ENCODE measurements at regions of chr3 and their contacts with region 1.

Region 1: GRCh38 chr3:168213920-168214319 is 118.2 kb upstream of the GOLIM4 start:
- DNase-seq: no peak
- H3K4me3 ChIP-seq: no peak overlapping the region
- H3K27ac ChIP-seq: no peak overlapping the region
- H3K4me1 ChIP-seq: peaks cover 0 to 6% (median 0%) of the 10 kb centered on the region in 4 donors
- H3K27me3 ChIP-seq: no peaks in the 10 kb centered on the region
- CTCF ChIP-seq: no peak
- EP300 ChIP-seq: no peak
- POLR2A ChIP-seq: no peak

Region 2: GRCh38 chr3:168061332-168061996 is 152.5 kb before region 1 on chr3:
- in situ Hi-C with region 1: no loop called
- intact Hi-C with region 1: no loop called
- DNase-seq: no peak
- H3K4me3 ChIP-seq: no peak overlapping the region
- H3K27ac ChIP-seq: peak overlapping the region in 1 of 4 donors; percentile 4
- H3K4me1 ChIP-seq: peaks cover 0 to 47% (median 32%) of the 10 kb centered on the region in 4 donors
- H3K27me3 ChIP-seq: no peaks in the 10 kb centered on the region
- CTCF ChIP-seq: no peak
- EP300 ChIP-seq: no peak
- POLR2A ChIP-seq: no peak

Region 3: DNA sequence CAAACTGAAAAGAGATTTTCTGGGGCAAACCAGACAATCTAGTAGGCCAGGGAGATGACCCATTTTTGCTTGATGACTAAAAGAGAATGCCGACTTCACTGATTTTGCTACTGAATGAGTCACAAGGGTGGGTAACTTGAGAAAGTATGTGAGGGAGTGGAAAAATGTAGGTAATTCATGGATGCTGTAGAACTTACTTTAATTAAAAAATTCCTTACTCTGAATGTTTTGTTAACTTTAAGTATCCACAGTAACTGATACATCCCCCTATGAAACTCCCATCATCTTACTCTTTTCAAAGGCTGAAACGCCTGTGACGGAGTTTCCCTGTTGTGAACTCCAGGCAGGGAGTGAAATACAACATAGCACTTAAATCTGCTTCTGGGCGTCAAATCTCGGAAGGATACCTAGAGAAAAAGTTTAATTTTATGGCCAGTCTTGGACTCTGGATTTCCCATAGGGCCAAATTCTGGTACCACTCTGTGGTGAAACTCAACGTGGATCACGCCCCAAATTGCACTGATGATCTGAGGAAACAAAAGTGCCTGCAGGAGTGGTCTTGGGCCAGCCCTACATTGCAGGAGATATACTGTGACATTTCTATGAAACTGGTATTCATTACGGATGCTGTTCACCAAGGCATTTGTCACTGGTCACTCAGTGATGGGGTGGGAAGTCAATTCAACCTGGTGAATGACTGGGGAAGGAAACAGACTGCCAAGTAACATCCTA is 142.2 kb before region 1 on chr3:
- in situ Hi-C with region 1: no loop called
- intact Hi-C with region 1: no loop called
- DNase-seq: no peak
- H3K4me3 ChIP-seq: no peak overlapping the region
- H3K27ac ChIP-seq: no peak overlapping the region
- H3K4me1 ChIP-seq: peaks cover 2 to 28% (median 9%) of the 10 kb centered on the region in 4 donors
- H3K27me3 ChIP-seq: no peaks in the 10 kb centered on the region
- CTCF ChIP-seq: no peak
- EP300 ChIP-seq: no peak
- POLR2A ChIP-seq: no peak

Region 4: DNA sequence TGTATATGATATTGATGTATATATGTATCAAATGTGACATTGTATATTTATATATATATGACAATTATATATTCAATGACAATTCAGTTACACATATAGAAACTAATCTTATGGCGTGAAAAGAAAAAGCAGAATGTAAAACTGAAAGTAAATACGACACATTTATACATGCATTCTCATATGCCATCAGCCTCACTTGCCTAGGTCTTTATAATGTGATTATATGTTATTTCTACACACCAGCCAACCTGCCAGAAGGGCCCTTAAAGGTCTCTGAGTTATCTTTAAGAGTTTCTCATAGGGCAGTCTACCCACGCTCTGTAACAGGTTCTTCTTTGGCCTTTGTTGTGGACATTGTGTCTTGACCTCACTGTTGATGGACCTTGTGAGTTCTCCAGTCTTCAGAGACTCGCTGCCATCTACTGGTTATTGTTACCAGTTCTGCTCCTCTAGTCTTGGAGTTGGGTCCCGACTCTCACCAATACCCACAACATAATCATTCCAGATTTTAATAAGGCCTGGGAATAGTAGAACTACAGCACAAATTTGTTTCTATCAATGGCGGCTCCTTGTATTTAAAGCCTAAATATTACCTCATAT is 253.3 kb after region 1 on chr3:
- in situ Hi-C with region 1: loop called in 2 of 4 experiments (anchors 25 kb)
- intact Hi-C with region 1: no loop called
- DNase-seq: no peak
- H3K4me3 ChIP-seq: no peak overlapping the region
- H3K27ac ChIP-seq: no peak overlapping the region
- H3K4me1 ChIP-seq: no peaks in the 10 kb centered on the region
- H3K27me3 ChIP-seq: no peaks in the 10 kb centered on the region
- CTCF ChIP-seq: peak in 2 of 5 experiments; percentile 17 to 21
- EP300 ChIP-seq: no peak
- POLR2A ChIP-seq: no peak

Region 5: DNA sequence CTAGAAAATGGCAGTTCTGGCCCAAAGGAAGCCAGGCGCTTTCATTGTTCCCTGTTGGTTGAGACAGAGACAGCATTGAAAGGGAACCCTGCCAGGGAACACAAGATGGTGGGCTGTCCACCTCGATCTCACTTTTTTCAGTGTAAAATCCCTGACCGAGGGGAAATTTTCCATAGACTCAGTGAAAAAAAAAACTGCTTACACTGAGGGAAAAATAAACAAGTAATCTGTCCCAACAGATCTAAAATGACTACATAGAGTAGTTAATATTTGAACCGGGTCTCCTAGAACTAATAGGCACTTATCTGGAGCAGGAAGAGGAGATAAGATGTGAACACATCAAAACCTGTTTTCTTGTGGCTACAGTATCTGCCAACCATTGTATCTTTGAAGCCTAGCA is 645.2 kb after region 1 on chr3:
- in situ Hi-C with region 1: loop called in 2 of 4 experiments (anchors 10 kb)
- intact Hi-C with region 1: no loop called
- DNase-seq: no peak
- H3K4me3 ChIP-seq: no peak overlapping the region
- H3K27ac ChIP-seq: no peak overlapping the region
- H3K4me1 ChIP-seq: peaks cover 0 to 42% (median 15%) of the 10 kb centered on the region in 4 donors
- H3K27me3 ChIP-seq: no peaks in the 10 kb centered on the region
- CTCF ChIP-seq: no peak
- EP300 ChIP-seq: no peak
- POLR2A ChIP-seq: no peak